ENCODE measurements at regions of chr11 and their contacts with region 1.

Region 1: DNA sequence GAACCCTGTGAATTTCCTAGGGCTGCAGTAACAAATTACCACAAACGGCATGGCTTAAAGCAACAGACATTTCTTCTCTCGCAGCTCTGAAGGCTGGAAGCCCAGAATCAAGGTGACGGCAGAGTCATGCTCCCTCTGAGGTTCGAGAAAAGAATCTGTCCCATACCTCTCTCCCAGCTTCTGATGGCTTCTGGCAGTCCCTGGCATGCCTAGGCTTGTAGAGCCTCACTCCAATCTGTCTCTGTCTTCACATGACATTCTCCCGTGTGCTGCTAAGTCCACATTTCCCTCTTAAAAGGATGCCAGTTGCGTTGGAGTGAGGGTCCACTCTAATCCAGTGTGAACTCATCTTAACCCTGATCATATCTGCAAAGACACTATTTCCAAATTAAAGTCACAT is 116.2 kb downstream of the NECTIN1 start:
- DNase-seq: no peak
- H3K4me3 ChIP-seq: no peak overlapping the region
- H3K27ac ChIP-seq: no peak overlapping the region
- H3K4me1 ChIP-seq: no peaks in the 10 kb centered on the region
- H3K27me3 ChIP-seq: peaks cover 0 to 4% of the 10 kb centered on the region in 2 donors
- CTCF ChIP-seq: no peak
- POLR2A ChIP-seq: no peak

Region 2: DNA sequence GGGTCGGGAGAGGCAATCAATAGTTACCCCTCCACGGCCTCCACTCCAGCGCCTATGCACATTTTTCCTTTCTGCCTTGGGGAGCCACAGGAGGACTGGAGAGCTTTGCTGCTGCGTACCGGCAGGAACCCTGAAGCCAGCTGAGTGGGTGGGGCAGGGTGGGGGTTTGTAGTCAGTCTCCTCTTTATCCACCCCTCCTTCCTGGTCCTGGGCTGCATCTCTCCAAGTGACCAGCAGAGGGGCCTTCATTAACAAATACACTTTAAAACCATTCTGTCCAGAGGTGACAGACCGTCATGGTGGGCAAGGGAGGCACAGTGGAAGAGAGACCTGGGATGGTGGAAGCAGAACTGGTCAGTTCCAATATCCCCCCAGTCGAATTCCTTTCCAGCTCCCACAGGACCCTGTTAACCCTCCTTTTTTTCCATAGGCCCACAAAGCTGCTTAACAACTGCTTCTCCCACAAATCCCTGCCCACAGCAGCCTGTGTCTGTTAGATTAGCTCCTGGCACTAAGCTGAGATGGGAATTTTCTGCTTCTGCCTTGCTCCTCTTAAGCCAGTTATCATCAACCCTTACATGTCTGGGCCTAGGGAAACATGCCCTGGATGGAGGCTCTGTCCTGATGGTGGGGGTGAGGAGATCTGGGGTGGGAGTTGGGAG is 467.9 kb before region 1 on chr11:
- intact Hi-C with region 1: no loop called
- DNase-seq: peak in 1 of 2 donors; percentile 30
- H3K4me3 ChIP-seq: peak overlapping the region in 1 of 3 donors; percentile 35
- H3K27ac ChIP-seq: no peak overlapping the region
- H3K4me1 ChIP-seq: no peaks in the 10 kb centered on the region
- H3K27me3 ChIP-seq: peaks cover 0 to 10% of the 10 kb centered on the region in 2 donors
- CTCF ChIP-seq: peak in 2 of 3 donors; percentile 45 to 62
- POLR2A ChIP-seq: no peak

Region 3: GRCh38 chr11:119647254-119647653 is 34.4 kb after region 1 on chr11:
- intact Hi-C with region 1: loop called (anchors 1 kb)
- DNase-seq: no peak
- H3K4me3 ChIP-seq: no peak overlapping the region
- H3K27ac ChIP-seq: no peak overlapping the region
- H3K4me1 ChIP-seq: no peaks in the 10 kb centered on the region
- H3K27me3 ChIP-seq: no peaks in the 10 kb centered on the region
- CTCF ChIP-seq: no peak
- POLR2A ChIP-seq: no peak

Region 4: DNA sequence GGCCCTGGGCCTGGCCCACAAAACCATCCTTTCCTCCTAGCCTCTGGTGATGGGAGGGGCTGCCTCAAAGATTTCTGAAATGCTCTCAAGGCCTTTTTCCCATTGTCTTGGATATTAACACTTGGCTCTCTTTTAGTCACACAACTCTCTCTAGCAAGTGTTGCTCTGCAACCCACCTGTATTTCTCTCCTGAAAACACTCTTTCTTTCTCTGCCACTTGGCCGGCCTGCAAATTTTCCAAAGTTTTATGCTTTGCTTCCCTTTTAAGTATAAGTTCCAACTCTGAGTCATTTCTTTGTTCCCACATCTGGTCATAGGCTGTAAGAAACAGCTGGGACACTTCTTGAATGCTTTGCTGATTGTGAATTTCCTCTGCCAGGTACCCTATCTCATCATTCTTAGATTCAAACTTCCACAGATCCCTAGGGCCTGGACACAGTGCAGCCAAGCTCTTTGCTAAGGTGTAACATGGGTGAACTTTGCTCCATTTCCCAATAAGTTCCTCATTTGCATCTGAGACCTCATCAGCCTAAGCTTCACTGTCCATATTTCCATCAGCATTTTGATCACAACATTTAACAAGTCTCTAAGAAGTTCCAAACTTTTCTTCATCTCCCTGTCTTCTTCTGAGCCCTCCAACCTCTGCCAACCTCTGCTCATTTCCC is 431.3 kb after region 1 on chr11:
- intact Hi-C with region 1: no loop called
- DNase-seq: no peak
- H3K4me3 ChIP-seq: no peak overlapping the region
- H3K27ac ChIP-seq: no peak overlapping the region
- H3K4me1 ChIP-seq: no peaks in the 10 kb centered on the region
- H3K27me3 ChIP-seq: no peaks in the 10 kb centered on the region
- CTCF ChIP-seq: no peak
- POLR2A ChIP-seq: no peak